H1 (cell line): ENCODE measurements at regions of chr2 and their contacts with region 1.

Region 1: GRCh38 chr2:30165050-30165520 is 18.3 kb downstream of the YPEL5 start:
- DNase-seq: peak in 1 of 2 experiments; percentile 46
- H3K4me3 ChIP-seq: no peak overlapping the region
- H3K27ac ChIP-seq: no peak overlapping the region
- H3K4me1 ChIP-seq: peaks cover 0 to 4% (median 0%) of the 10 kb centered on the region in 4 experiments; a peak in 1 of 7 replicates
- H3K27me3 ChIP-seq: no peaks in the 10 kb centered on the region; a peak in 1 of 7 replicates
- CTCF ChIP-seq: peak; percentile 60 to 98 (median 90)
- EP300 ChIP-seq: no peak
- POLR2A ChIP-seq: no peak
- RAD21 ChIP-seq: peak; percentile 89 to 91

Region 2: GRCh38 chr2:30115141-30115980 is 49.7 kb before region 1 on chr2:
- CTCF ChIA-PET with region 1: interaction called, 12 read pairs
- POLR2A ChIA-PET with region 1: no interaction called
- DNase-seq: peak; percentile 57 to 93
- H3K4me3 ChIP-seq: no peak overlapping the region
- H3K27ac ChIP-seq: no peak overlapping the region
- H3K4me1 ChIP-seq: peaks cover 0 to 7% (median 2%) of the 10 kb centered on the region in 4 experiments; a peak in 2 of 7 replicates
- H3K27me3 ChIP-seq: no peaks in the 10 kb centered on the region
- CTCF ChIP-seq: peak; percentile 91 to 99 (median 94)
- EP300 ChIP-seq: no peak
- POLR2A ChIP-seq: no peak
- RAD21 ChIP-seq: peak; percentile 91 to 95

Region 3: GRCh38 chr2:30127016-30127893 is 37.8 kb before region 1 on chr2:
- CTCF ChIA-PET with region 1: no interaction called
- POLR2A ChIA-PET with region 1: no interaction called
- DNase-seq: no peak
- H3K4me3 ChIP-seq: no peak overlapping the region
- H3K27ac ChIP-seq: no peak overlapping the region
- H3K4me1 ChIP-seq: 0 out of 7 replicates have a peak, but pooled peaks cover 0 to under 1% (median 0%) of the 10 kb centered on the region in 4 experiments
- H3K27me3 ChIP-seq: no peaks in the 10 kb centered on the region
- CTCF ChIP-seq: no peak
- EP300 ChIP-seq: no peak
- POLR2A ChIP-seq: no peak
- RAD21 ChIP-seq: no peak

Region 4: GRCh38 chr2:30147715-30148610 is 17.1 kb before region 1 on chr2:
- CTCF ChIA-PET with region 1: interaction called, 60 read pairs
- POLR2A ChIA-PET with region 1: interaction called, 24 read pairs
- DNase-seq: peak in 1 of 2 experiments; percentile 88
- H3K4me3 ChIP-seq: peak overlapping the region; percentile 57 to 85 (median 74)
- H3K27ac ChIP-seq: no peak overlapping the region
- H3K4me1 ChIP-seq: peaks cover 4 to 22% (median 14%) of the 10 kb centered on the region in 4 experiments; a peak in 6 of 7 replicates
- H3K27me3 ChIP-seq: no peaks in the 10 kb centered on the region; a peak in 2 of 7 replicates
- CTCF ChIP-seq: peak; percentile 20 to 32 (median 31); a peak in 3 of 4 replicates
- EP300 ChIP-seq: 0 out of 3 replicates have a peak, but pooled peaks of 1 of the 2 experiments have one; percentile 47
- POLR2A ChIP-seq: no peak
- RAD21 ChIP-seq: no peak

Region 5: GRCh38 chr2:30178618-30179434 is 13.7 kb after region 1 on chr2:
- CTCF ChIA-PET with region 1: interaction called, 13 read pairs
- POLR2A ChIA-PET with region 1: no interaction called
- DNase-seq: no peak
- H3K4me3 ChIP-seq: no peak overlapping the region
- H3K27ac ChIP-seq: no peak overlapping the region
- H3K4me1 ChIP-seq: no peaks in the 10 kb centered on the region
- H3K27me3 ChIP-seq: no peaks in the 10 kb centered on the region
- CTCF ChIP-seq: no peak
- EP300 ChIP-seq: no peak
- POLR2A ChIP-seq: no peak
- RAD21 ChIP-seq: no peak

Region 6: GRCh38 chr2:30231212-30231995 is 66.3 kb after region 1 on chr2 and contains the start of gene LBH:
- CTCF ChIA-PET with region 1: interaction called, 15 read pairs
- POLR2A ChIA-PET with region 1: interaction called, 9 read pairs
- DNase-seq: peak; percentile 66 to 78
- H3K4me3 ChIP-seq: peak within 1 kb of the TSS; percentile 67 to 81 (median 70)
- H3K27ac ChIP-seq: 0 out of 2 replicates have a peak within 1 kb of the TSS, but pooled peaks have one; percentile 7
- H3K4me1 ChIP-seq: peaks cover 0 to 9% (median 5%) of the 10 kb centered on the region in 4 experiments; a peak in 4 of 7 replicates
- H3K27me3 ChIP-seq: peaks cover 3 to 25% (median 20%) of the 10 kb centered on the region in 4 experiments
- CTCF ChIP-seq: no peak
- EP300 ChIP-seq: no peak
- POLR2A ChIP-seq: peak; percentile 95 to 97
- RAD21 ChIP-seq: no peak
- total RNA-seq, gene LBH: 24.6 and 25.7 TPM in 2 replicates

Region 7: DNA sequence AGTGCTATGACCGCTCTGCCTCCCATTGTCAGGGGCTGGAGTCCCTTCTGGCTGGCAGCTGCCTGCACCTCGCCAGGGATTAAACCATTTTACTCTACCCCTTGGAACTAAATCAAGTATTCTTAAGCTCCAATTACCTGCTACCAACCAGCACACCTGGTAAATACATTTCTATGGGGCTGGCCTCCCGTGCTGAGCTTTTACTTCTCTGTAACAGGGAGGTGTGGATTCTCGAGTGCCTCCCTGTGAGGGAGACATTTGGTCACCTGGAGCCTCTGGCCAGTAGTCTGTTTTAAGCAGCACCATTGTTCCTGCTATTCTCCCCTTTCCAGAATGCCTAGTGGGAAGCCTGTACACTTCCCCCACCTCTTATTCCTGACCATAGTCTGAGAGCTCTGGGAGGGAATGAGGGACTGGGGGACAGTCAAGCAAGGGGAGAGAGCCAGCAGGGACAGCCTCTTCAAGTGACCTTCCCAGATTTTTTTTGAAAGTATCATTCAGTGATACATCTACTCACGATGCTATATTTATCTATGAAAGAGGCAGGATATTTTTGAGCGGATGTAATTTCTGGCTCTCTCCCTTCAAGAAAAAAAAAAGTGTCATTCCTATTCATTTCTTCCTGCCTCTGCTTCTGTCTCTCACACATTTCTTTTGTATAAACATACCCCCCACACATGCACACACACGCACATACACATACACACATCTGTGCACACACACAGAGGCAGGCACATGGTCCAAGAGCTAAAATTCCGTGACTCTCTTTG is 529.4 kb after region 1 on chr2:
- CTCF ChIA-PET with region 1: interaction called, 19 read pairs
- POLR2A ChIA-PET with region 1: no interaction called
- DNase-seq: peak in 1 of 2 experiments; percentile 13
- H3K4me3 ChIP-seq: no peak overlapping the region
- H3K27ac ChIP-seq: no peak overlapping the region
- H3K4me1 ChIP-seq: no peaks in the 10 kb centered on the region
- H3K27me3 ChIP-seq: no peaks in the 10 kb centered on the region
- CTCF ChIP-seq: no peak
- EP300 ChIP-seq: no peak
- POLR2A ChIP-seq: no peak
- RAD21 ChIP-seq: no peak